Caco-2 (cell line): ENCODE measurements at regions of chr17 and their contacts with region 1.

Region 1: DNA sequence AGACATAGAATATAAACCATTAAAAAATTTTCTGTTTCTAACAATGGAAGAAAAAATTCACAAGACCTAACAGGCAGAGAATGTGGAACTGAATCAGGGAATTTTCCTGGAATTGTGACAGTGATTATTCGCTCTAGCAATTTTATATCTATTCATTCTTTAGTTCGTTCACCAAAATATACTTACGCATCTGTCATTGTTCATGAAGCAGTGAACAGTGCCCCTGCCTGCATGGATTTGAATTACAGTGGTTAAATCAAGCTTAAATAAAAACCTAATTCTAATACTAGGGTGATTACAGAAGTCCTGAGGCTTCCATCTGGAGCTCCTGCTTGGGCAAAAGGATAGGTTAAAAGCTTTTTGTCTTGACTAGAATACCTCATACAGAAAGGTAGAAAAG is 48.6 kb downstream of the ABCA8 start:
- DNase-seq: peak in 1 of 2 experiments; percentile 11
- H3K4me3 ChIP-seq: no peak overlapping the region
- H3K4me3 Mint-ChIP-seq: no peak overlapping the region
- H3K27ac Mint-ChIP-seq: no peak overlapping the region
- H3K4me1 ChIP-seq: peaks cover 5% of the 10 kb centered on the region; the same call in 1 of the 2 replicates
- H3K4me1 Mint-ChIP-seq: peaks cover under 1% of the 10 kb centered on the region
- H3K27me3 ChIP-seq: no peaks in the 10 kb centered on the region
- H3K27me3 Mint-ChIP-seq: no peaks in the 10 kb centered on the region
- CTCF ChIP-seq: peak; percentile 45 to 64

Region 2: GRCh38 chr17:68937890-68938514 is 31.4 kb after region 1 on chr17:
- CTCF ChIA-PET with region 1: no interaction called
- POLR2A ChIA-PET with region 1: no interaction called
- intact Hi-C with region 1: no loop called
- DNase-seq: peak in 1 of 2 experiments; percentile 26
- H3K4me3 ChIP-seq: no peak overlapping the region
- H3K4me3 Mint-ChIP-seq: no peak overlapping the region
- H3K27ac Mint-ChIP-seq: no peak overlapping the region
- H3K4me1 ChIP-seq: peaks cover 16% of the 10 kb centered on the region
- H3K4me1 Mint-ChIP-seq: peaks cover 7% of the 10 kb centered on the region
- H3K27me3 ChIP-seq: no peaks in the 10 kb centered on the region
- H3K27me3 Mint-ChIP-seq: no peaks in the 10 kb centered on the region
- CTCF ChIP-seq: no peak

Region 3: DNA sequence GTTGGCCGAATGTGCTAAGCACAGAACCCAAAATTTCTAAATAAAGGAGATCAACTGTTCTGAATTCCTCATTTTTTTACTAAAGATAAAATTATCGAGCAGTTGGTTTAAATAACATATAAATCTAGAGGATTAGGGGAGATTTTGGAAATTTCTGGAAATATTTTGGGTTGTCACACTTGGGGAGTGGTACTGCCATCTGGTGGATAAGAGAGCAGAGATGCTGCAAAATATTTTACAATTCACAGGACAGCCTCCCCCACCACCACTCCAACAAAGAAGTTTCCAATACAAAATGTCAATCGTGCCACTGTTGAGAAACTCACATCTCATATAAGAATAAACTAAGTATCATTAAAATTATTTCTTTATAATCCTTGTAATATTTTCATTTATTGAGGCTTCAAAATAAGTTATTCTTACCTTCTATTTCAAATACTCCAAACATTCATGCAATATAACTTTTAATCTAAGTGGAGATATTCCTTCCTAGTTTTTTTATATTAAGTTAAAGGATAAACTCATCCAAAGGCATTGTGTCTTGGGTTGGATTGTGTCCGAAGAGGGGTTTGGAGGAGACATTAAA is 65.6 kb after region 1 on chr17:
- CTCF ChIA-PET with region 1: no interaction called
- POLR2A ChIA-PET with region 1: no interaction called
- intact Hi-C with region 1: loop called (anchors 1 kb)
- DNase-seq: peak in 1 of 2 experiments; percentile 49
- H3K4me3 ChIP-seq: no peak overlapping the region
- H3K4me3 Mint-ChIP-seq: no peak overlapping the region
- H3K27ac Mint-ChIP-seq: no peak overlapping the region
- H3K4me1 ChIP-seq: no peaks in the 10 kb centered on the region
- H3K4me1 Mint-ChIP-seq: no peaks in the 10 kb centered on the region
- H3K27me3 ChIP-seq: no peaks in the 10 kb centered on the region
- H3K27me3 Mint-ChIP-seq: no peaks in the 10 kb centered on the region
- CTCF ChIP-seq: peak; percentile 60 to 72

Region 4: GRCh38 chr17:69235338-69235930 is 328.8 kb after region 1 on chr17:
- CTCF ChIA-PET with region 1: no interaction called
- POLR2A ChIA-PET with region 1: no interaction called
- intact Hi-C with region 1: loop called (anchors 1 kb)
- DNase-seq: peak; percentile 89 to 92
- H3K4me3 ChIP-seq: no peak overlapping the region
- H3K4me3 Mint-ChIP-seq: no peak overlapping the region
- H3K27ac Mint-ChIP-seq: no peak overlapping the region
- H3K4me1 ChIP-seq: peaks cover 5% of the 10 kb centered on the region
- H3K4me1 Mint-ChIP-seq: peaks cover 6% of the 10 kb centered on the region
- H3K27me3 ChIP-seq: no peaks in the 10 kb centered on the region
- H3K27me3 Mint-ChIP-seq: no peaks in the 10 kb centered on the region
- CTCF ChIP-seq: peak; percentile 86 to 89